GM12878 (cell line): ENCODE measurements at regions of chr2 and their contacts with region 1.

Region 1: GRCh38 chr2:48420512-48421197 is 109.3 kb upstream of the STON1 start:
- DNase-seq: no peak
- ATAC-seq: peak; percentile 95
- H3K4me3 ChIP-seq: no peak overlapping the region
- H3K27ac ChIP-seq: no peak overlapping the region
- H3K4me1 ChIP-seq: peaks cover 13% of the 10 kb centered on the region
- H3K27me3 ChIP-seq: no peaks in the 10 kb centered on the region
- CTCF ChIP-seq: peak; percentile 92 to 98 (median 96)
- EP300 ChIP-seq: no peak
- POLR2A ChIP-seq: no peak
- RAD21 ChIP-seq: peak; percentile 99

Region 2: DNA sequence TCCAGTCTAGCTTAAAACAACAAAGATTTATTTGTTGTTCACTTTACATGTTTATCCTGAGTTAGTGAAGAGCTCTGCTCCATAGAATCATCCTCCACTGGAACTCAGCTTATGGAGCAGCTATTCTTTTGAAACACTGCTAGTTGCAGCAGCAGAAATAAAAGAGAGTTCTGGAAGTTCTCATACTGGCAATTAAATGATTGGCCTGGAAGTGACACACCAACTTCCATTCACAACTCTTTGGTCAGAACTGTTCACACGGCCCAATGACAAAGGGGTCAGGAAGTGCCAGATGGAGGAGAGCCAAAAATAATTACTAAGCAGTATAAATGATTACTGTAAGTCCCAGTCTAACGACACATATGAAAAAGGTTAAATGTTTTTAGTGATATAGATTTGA is 553.5 kb before region 1 on chr2:
- CTCF ChIA-PET with region 1: no interaction called
- POLR2A ChIA-PET with region 1: no interaction called
- RAD21 ChIA-PET with region 1: no interaction called
- SMC1A ChIA-PET with region 1: no interaction called
- in situ Hi-C with region 1: loop called (anchors 5 kb)
- intact Hi-C with region 1: no loop called
- DNase-seq: no peak
- ATAC-seq: peak; percentile 23; the same call in 1 of the 3 replicates
- H3K4me3 ChIP-seq: no peak overlapping the region
- H3K27ac ChIP-seq: 0 out of 2 replicates have a peak overlapping the region, but pooled peaks have one; percentile 8
- H3K4me1 ChIP-seq: no peaks in the 10 kb centered on the region
- H3K27me3 ChIP-seq: no peaks in the 10 kb centered on the region
- CTCF ChIP-seq: no peak
- EP300 ChIP-seq: no peak
- POLR2A ChIP-seq: no peak
- RAD21 ChIP-seq: no peak

Region 3: GRCh38 chr2:48107326-48107925 is 313.2 kb before region 1 on chr2:
- CTCF ChIA-PET with region 1: interaction called, 25 read pairs
- POLR2A ChIA-PET with region 1: no interaction called
- RAD21 ChIA-PET with region 1: interaction called, 17 read pairs
- SMC1A ChIA-PET with region 1: interaction called, 19 read pairs
- in situ Hi-C with region 1: no loop called
- intact Hi-C with region 1: no loop called
- DNase-seq: no peak
- ATAC-seq: no peak
- H3K4me3 ChIP-seq: no peak overlapping the region
- H3K27ac ChIP-seq: no peak overlapping the region
- H3K4me1 ChIP-seq: peaks cover 8% of the 10 kb centered on the region
- H3K27me3 ChIP-seq: no peaks in the 10 kb centered on the region
- CTCF ChIP-seq: no peak
- EP300 ChIP-seq: no peak
- POLR2A ChIP-seq: no peak
- RAD21 ChIP-seq: no peak

Region 4: GRCh38 chr2:48114256-48114655 is 306.4 kb before region 1 on chr2:
- CTCF ChIA-PET with region 1: interaction called, 25 read pairs
- POLR2A ChIA-PET with region 1: interaction called, 3 read pairs
- RAD21 ChIA-PET with region 1: interaction called, 17 read pairs
- SMC1A ChIA-PET with region 1: interaction called, 19 read pairs
- in situ Hi-C with region 1: no loop called
- intact Hi-C with region 1: no loop called
- DNase-seq: no peak
- ATAC-seq: peak; percentile 71
- H3K4me3 ChIP-seq: no peak overlapping the region
- H3K27ac ChIP-seq: no peak overlapping the region
- H3K4me1 ChIP-seq: peaks cover 8% of the 10 kb centered on the region
- H3K27me3 ChIP-seq: no peaks in the 10 kb centered on the region
- CTCF ChIP-seq: no peak
- EP300 ChIP-seq: no peak
- POLR2A ChIP-seq: no peak
- RAD21 ChIP-seq: no peak

Region 5: DNA sequence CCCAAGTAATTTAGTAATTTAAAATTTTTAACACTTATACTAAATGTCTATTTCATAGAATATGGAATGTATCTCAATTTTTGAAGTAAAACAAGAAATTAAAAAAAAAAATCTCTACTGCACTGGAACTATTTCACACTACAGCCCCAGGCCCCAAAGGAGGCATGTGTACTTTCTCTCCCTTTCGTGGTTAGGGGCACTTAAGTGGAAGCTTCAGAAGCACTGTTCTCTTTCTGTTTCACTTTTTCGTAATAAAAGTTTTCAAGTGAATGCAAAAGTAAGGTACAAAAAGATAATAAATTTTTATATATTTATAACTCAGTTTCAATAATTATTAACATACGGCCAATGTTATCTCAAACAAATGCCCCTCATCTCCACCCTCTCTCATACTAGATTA is 14.5 kb before region 1 on chr2:
- CTCF ChIA-PET with region 1: interaction called, 14 read pairs
- POLR2A ChIA-PET with region 1: no interaction called
- RAD21 ChIA-PET with region 1: interaction called, 4 read pairs
- SMC1A ChIA-PET with region 1: interaction called, 7 read pairs
- in situ Hi-C with region 1: no loop called
- intact Hi-C with region 1: no loop called
- DNase-seq: no peak
- ATAC-seq: 0 out of 3 replicates have a peak, but pooled peaks have one; percentile 51
- H3K4me3 ChIP-seq: no peak overlapping the region
- H3K27ac ChIP-seq: no peak overlapping the region
- H3K4me1 ChIP-seq: no peaks in the 10 kb centered on the region; the same call in 1 of the 2 replicates
- H3K27me3 ChIP-seq: no peaks in the 10 kb centered on the region
- CTCF ChIP-seq: no peak
- EP300 ChIP-seq: no peak
- POLR2A ChIP-seq: no peak
- RAD21 ChIP-seq: no peak

Region 6: DNA sequence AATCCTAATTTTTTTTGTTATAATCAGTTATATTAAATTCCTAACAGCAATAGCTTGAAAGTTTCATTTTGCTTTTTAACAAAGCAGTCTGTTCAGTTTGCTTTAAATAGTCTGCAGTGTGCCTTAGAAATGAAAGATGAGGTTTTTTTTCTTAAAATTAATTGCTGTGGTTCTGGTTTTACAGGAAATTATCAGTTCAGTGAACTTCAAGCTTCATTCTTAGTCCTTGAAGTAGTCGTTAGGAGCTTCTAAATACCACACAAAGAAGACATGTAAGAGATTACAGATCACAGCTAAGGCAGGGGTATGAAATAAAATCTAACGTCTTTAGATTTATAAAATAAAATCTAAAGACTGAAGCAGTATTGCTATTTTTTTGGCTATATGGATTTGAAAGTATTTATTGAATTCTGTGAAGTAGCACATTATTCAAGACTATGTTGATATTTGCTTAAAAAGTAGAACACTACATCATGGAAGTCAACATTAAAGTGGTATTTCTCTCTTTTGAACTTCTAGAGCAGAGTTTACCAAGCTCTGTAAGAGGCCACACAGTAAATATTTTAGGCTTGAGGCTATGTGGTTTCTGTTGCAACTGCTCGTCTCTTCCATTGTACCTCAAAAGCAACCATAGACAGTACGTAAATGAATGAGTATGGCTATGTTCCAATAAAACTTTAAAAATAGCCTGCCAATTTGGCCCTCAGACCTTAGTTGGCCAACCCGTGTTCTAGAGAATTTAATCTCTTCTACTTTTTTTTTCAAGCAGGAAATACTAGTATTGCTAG is 27.8 kb after region 1 on chr2:
- CTCF ChIA-PET with region 1: interaction called, 9 read pairs
- POLR2A ChIA-PET with region 1: no interaction called
- RAD21 ChIA-PET with region 1: interaction called, 5 read pairs
- SMC1A ChIA-PET with region 1: interaction called, 10 read pairs
- in situ Hi-C with region 1: no loop called
- intact Hi-C with region 1: no loop called
- DNase-seq: peak; percentile 53
- ATAC-seq: peak; percentile 69
- H3K4me3 ChIP-seq: peak overlapping the region; percentile 43
- H3K27ac ChIP-seq: peak overlapping the region; percentile 58
- H3K4me1 ChIP-seq: peaks cover 46% of the 10 kb centered on the region
- H3K27me3 ChIP-seq: no peaks in the 10 kb centered on the region
- CTCF ChIP-seq: no peak
- EP300 ChIP-seq: no peak
- POLR2A ChIP-seq: no peak
- RAD21 ChIP-seq: no peak

Region 7: GRCh38 chr2:48530033-48530804 is 109.6 kb after region 1 on chr2 and contains the start of gene STON1:
- CTCF ChIA-PET with region 1: no interaction called
- POLR2A ChIA-PET with region 1: no interaction called
- RAD21 ChIA-PET with region 1: no interaction called
- SMC1A ChIA-PET with region 1: no interaction called
- in situ Hi-C with region 1: no loop called
- intact Hi-C with region 1: no loop called
- DNase-seq: no peak
- ATAC-seq: peak; percentile 78
- H3K4me3 ChIP-seq: peak within 1 kb of the TSS; percentile 67; the same call in 1 of the 2 replicates
- H3K27ac ChIP-seq: no peak within 1 kb of the TSS
- H3K4me1 ChIP-seq: no peaks in the 10 kb centered on the region; the same call in 1 of the 2 replicates
- H3K27me3 ChIP-seq: no peaks in the 10 kb centered on the region; a peak in 1 of 4 replicates
- CTCF ChIP-seq: no peak
- EP300 ChIP-seq: no peak
- POLR2A ChIP-seq: no peak
- RAD21 ChIP-seq: no peak
- polyA plus RNA-seq, gene STON1: 0.11 TPM in 1 of 2 experiments, not detected in the other